Right cardiac atrium (tissue), 5 donors: ENCODE measurements at regions of chr3 and their contacts with region 1.

Region 1: DNA sequence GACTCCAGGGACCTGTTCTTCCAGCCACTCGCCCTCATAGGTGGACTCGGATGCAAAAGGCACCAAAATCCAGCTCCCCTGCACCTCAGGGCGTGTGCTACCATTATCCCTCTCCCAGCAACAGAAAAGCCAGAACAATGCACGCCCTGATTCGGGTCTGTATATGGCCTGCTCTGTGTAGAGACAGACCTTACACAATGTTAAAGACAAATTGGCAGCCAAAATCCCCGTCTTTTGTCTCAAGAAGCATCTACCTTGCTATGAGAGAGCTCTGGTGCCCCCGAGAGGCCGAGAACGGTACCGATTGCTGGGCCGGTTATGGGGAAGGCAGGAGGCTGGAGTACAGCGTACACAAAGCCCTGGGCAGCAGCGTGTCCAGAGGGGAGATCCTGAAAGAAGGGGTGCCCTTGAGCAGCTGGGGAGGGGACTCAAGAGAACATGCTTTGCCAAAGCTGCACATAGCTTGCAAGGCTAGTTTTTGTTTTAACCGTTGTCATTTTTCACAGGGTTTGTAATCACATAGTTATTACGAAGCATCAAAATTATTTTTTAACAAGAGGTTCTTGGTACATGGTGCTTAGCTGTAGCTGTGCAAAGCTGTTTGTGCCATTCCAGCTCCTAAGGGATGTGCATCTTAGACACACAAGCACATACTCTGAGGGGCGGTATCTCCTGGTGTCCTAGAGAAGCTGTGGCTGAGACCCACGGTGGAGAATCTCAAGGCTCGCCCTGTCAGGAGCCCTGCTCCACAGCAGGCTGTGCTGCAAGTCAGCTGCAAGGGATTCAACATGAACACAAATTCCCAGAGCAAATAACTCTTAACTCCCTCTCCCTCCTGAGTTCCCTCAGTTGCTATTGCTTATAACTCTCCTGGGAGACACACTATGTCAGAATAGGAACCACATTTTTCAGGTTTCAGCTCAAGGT is 461.5 kb upstream of the PPP2R3A start:
- DNase-seq: peak; percentile 44 to 86 (median 81)
- ATAC-seq: peak; percentile 71 to 82
- H3K4me3 ChIP-seq: no peak overlapping the region
- H3K27ac ChIP-seq: no peak overlapping the region
- H3K4me1 ChIP-seq: no peaks in the 10 kb centered on the region
- H3K27me3 ChIP-seq: no peaks in the 10 kb centered on the region

Region 2: DNA sequence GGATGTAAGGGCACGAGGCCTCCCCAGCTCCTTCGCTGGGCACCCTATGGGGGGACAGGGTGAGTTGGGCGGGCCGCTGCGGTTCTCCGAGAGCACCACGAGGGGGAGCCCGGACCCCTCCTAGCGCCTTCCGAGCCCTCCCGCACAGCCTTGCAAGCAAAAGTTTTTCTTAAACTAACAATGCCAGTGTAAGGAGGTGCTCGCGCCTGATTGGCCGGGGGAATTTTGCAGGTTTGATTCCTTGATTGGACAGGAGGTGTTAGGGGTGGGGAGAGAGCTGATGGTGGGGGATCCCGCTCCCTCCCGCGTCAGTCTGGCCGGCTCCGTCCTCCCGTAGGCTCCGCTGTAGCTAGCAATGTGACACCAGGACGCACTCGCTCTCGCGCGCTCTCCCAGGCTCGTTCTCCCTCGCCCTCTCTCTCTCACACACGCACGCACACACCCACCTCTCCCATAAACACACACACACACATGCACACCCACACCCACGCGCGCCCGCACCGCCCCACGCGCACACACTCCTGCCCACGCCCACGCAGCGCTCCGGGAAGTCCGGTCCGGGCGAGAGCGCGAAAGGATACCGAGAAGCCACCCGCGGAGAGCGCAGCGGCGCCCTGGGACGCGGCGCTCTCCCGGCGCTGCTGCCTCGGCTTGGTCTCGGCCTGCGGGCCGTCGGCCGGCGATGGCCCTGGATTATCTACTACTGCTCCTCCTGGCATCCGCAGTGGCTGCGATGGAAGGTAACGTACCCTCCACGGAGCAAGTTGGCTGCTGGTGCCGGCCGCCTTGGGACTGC is 708.9 kb before region 1 on chr3 and contains the start of gene EPHB1:
- intact Hi-C with region 1: loop called in 3 of 4 experiments (anchors 5 kb)
- DNase-seq: peak; percentile 78 to 89 (median 88)
- ATAC-seq: peak; percentile 92 to 94
- H3K4me3 ChIP-seq: peak within 1 kb of the TSS; percentile 15
- H3K27ac ChIP-seq: no peak within 1 kb of the TSS
- H3K4me1 ChIP-seq: no peaks in the 10 kb centered on the region
- H3K27me3 ChIP-seq: no peaks in the 10 kb centered on the region
- total RNA-seq, gene EPHB1: 0.97 to 1.6 (median 1.3) TPM

Region 3: GRCh38 chr3:134817297-134817696 is 686.7 kb before region 1 on chr3:
- intact Hi-C with region 1: loop called in 1 of 4 experiments (anchors 10 kb)
- DNase-seq: no peak
- ATAC-seq: peak in 1 of 2 donors; percentile 29
- H3K4me3 ChIP-seq: no peak overlapping the region
- H3K27ac ChIP-seq: no peak overlapping the region
- H3K4me1 ChIP-seq: no peaks in the 10 kb centered on the region
- H3K27me3 ChIP-seq: no peaks in the 10 kb centered on the region

Region 4: GRCh38 chr3:135549928-135550494 is 46.0 kb after region 1 on chr3:
- intact Hi-C with region 1: no loop called
- DNase-seq: no peak
- ATAC-seq: no peak
- H3K4me3 ChIP-seq: no peak overlapping the region
- H3K27ac ChIP-seq: no peak overlapping the region
- H3K4me1 ChIP-seq: no peaks in the 10 kb centered on the region
- H3K27me3 ChIP-seq: no peaks in the 10 kb centered on the region